CD4-positive, alpha-beta T cell (primary cell): ENCODE measurements at regions of chr9 and their contacts with region 1.

Region 1: DNA sequence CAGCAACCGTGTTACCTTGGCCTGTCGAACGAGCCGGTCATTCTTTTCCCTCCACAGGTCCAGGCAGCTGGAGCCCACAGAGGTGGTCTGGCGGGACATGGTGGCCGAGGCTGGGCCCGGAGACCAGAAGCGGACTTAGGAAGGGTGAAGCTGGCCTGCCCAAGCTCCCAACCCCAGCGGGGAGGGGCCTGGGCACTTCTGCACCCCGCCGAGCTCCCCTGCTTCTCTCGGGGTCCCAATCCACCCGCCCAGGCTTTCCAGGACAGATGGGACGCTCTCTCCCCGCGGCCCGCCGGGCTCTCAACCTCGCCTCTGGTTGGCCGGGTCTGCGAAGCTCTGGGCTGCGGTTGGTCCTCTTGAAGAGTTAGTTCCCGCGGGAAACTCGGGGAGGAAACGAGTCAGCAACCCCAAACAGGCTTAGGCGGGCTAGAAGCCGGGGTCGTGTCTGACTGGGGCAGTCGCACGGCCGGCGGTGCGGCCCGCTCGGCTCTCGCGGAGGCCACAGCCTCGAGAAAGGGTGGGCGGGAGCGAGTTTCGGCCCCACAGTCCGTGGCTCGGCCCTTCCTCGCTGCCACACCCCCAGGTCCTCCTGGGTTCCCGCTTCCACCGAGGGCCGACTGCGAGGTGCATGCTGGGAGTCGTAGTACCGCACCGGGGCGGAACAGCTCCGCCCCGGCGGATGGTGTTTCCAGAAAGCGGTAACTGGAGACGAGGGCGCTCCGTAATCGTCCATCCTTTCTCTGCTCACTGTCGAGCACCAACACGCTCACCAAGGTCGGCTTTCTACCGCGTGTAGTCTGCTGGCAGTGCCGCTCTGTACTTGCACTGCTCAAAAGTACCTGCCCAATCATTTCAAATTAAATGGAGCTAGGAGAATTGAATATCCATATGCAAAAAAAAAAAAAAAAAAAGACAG is at the start of gene FANCG:
- DNase-seq: peak; percentile 60 to 90 (median 74)
- ATAC-seq: peak; percentile 90
- H3K4me3 ChIP-seq: peak within 1 kb of the TSS; percentile 69
- H3K4me3 Mint-ChIP-seq: peak within 1 kb of the TSS; percentile 96
- H3K27ac ChIP-seq: peak within 1 kb of the TSS; percentile 43 to 62
- H3K27ac Mint-ChIP-seq: peak within 1 kb of the TSS; percentile 91
- H3K4me1 ChIP-seq: peaks cover 19% of the 10 kb centered on the region
- H3K4me1 Mint-ChIP-seq: peaks cover 23% of the 10 kb centered on the region
- H3K27me3 ChIP-seq: no peaks in the 10 kb centered on the region
- H3K27me3 Mint-ChIP-seq: no peaks in the 10 kb centered on the region
- CTCF ChIP-seq: no peak
- total RNA-seq, gene FANCG: 21.7 to 24.6 TPM

Region 2: GRCh38 chr9:34825775-34826174 is 253.9 kb before region 1 on chr9:
- CTCF ChIA-PET with region 1: no interaction called
- POLR2A ChIA-PET with region 1: no interaction called
- intact Hi-C with region 1: no loop called
- DNase-seq: no peak
- ATAC-seq: no peak
- H3K4me3 ChIP-seq: no peak overlapping the region
- H3K4me3 Mint-ChIP-seq: no peak overlapping the region
- H3K27ac ChIP-seq: no peak overlapping the region
- H3K27ac Mint-ChIP-seq: no peak overlapping the region
- H3K4me1 ChIP-seq: no peaks in the 10 kb centered on the region
- H3K4me1 Mint-ChIP-seq: no peaks in the 10 kb centered on the region
- H3K27me3 ChIP-seq: peaks cover 8 to 17% of the 10 kb centered on the region in 2 experiments
- H3K27me3 Mint-ChIP-seq: peaks cover 29% of the 10 kb centered on the region
- CTCF ChIP-seq: no peak

Region 3: DNA sequence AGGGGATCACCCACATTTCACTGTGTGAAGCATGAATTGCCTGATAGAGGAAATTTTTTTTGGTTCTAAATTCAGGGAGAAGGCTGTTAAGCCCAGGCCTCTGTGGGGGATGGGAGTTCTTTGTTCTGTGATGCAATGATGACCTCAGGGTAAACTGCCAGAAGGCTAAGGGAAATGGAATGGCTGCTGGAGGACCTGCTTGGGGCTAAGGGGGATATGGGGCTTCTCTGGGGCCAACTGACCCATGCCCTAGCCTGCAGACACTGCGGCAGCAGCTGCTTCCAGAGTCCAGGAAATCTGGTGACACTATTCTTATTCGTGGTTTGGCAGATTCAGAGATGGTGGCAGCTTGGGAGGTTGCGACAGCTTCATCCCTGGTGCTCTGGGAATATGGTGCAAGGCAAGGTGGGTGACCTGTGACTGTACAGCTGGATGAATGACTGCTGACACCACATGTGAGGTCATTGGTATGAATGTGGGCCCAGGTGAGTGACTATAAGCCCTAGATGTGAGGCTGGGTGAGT is 37.5 kb before region 1 on chr9:
- CTCF ChIA-PET with region 1: no interaction called
- POLR2A ChIA-PET with region 1: no interaction called
- intact Hi-C with region 1: no loop called
- DNase-seq: no peak
- ATAC-seq: no peak
- H3K4me3 ChIP-seq: no peak overlapping the region
- H3K4me3 Mint-ChIP-seq: no peak overlapping the region
- H3K27ac ChIP-seq: no peak overlapping the region
- H3K27ac Mint-ChIP-seq: no peak overlapping the region
- H3K4me1 ChIP-seq: no peaks in the 10 kb centered on the region
- H3K4me1 Mint-ChIP-seq: no peaks in the 10 kb centered on the region
- H3K27me3 ChIP-seq: no peaks in the 10 kb centered on the region
- H3K27me3 Mint-ChIP-seq: no peaks in the 10 kb centered on the region
- CTCF ChIP-seq: no peak

Region 4: GRCh38 chr9:35096035-35096849 is 16.6 kb after region 1 on chr9 and contains the start of gene PIGO:
- CTCF ChIA-PET with region 1: interaction called, 26 read pairs
- POLR2A ChIA-PET with region 1: interaction called, 51 read pairs
- intact Hi-C with region 1: loop called in 1 of 2 experiments (anchors 1 kb)
- DNase-seq: peak; percentile 81 to 95 (median 88)
- ATAC-seq: peak; percentile 88
- H3K4me3 ChIP-seq: peak within 1 kb of the TSS; percentile 82
- H3K4me3 Mint-ChIP-seq: peak within 1 kb of the TSS; percentile 92
- H3K27ac ChIP-seq: peak within 1 kb of the TSS; percentile 96 to 99
- H3K27ac Mint-ChIP-seq: peak within 1 kb of the TSS; percentile 93
- H3K4me1 ChIP-seq: peaks cover 26% of the 10 kb centered on the region
- H3K4me1 Mint-ChIP-seq: peaks cover 43% of the 10 kb centered on the region
- H3K27me3 ChIP-seq: no peaks in the 10 kb centered on the region
- H3K27me3 Mint-ChIP-seq: no peaks in the 10 kb centered on the region
- CTCF ChIP-seq: peak; percentile 81
- total RNA-seq, gene PIGO: 17.5 to 18.9 TPM

Region 5: GRCh38 chr9:35102926-35103659 is 23.4 kb after region 1 on chr9 and contains the start of gene STOML2:
- CTCF ChIA-PET with region 1: interaction called, 4 read pairs
- POLR2A ChIA-PET with region 1: interaction called, 24 read pairs
- intact Hi-C with region 1: loop called in 1 of 2 experiments (anchors 1 kb)
- DNase-seq: peak; percentile 84 to 97 (median 90)
- ATAC-seq: peak; percentile 98
- H3K4me3 ChIP-seq: peak within 1 kb of the TSS; percentile 99
- H3K4me3 Mint-ChIP-seq: peak within 1 kb of the TSS; percentile 92
- H3K27ac ChIP-seq: peak within 1 kb of the TSS; percentile 77 to 94
- H3K27ac Mint-ChIP-seq: peak within 1 kb of the TSS; percentile 89
- H3K4me1 ChIP-seq: peaks cover 28% of the 10 kb centered on the region
- H3K4me1 Mint-ChIP-seq: peaks cover 36% of the 10 kb centered on the region
- H3K27me3 ChIP-seq: no peaks in the 10 kb centered on the region
- H3K27me3 Mint-ChIP-seq: no peaks in the 10 kb centered on the region
- CTCF ChIP-seq: no peak
- total RNA-seq, gene STOML2: 29.8 to 30.5 TPM

Region 6: DNA sequence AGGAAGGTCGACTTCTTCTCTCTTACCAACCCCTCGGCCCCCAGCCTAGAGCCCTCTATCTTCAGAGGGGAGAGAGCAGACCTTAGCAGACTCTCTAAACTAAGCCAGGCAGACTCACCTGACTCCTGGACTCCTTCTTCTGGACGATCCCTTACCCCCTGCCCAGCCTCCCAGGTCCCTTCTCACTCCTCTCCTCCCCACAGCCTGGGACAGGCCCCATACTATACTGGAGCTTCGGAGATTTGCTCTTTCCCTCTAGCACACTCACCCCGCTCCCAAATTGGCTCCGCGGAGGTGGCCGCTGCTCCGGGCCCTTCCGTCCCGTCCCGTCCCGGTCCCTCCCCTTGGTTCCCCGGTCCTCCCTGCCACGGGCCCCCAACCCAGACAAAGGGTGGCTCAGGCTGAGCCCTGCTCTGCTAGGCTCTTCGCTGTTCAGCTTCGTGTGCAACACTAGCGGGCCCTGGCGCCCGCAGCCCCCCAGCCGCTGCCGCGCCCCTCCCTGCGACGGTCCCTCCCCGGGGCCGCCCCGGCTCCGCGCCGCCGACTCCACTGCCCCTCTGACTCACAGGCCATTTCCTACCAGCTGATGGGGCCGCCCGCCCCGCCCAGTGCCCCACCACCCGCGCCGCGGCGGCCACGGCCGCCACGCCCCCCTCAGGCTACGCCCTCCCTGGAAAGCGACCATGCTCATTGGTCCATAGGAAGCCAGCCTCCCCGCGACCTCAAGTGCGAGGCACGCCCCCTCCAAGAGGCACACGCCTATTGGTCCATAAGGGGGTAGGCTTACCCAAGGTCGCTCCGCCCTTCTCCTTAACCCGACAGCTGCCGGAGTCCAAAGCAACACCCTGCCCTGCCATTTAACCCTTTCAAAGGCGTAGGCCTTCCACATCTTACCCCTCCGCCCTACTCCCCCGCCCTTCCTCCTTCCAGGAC is 31.6 kb after region 1 on chr9:
- CTCF ChIA-PET with region 1: no interaction called
- POLR2A ChIA-PET with region 1: interaction called, 11 read pairs
- intact Hi-C with region 1: loop called (anchors 2 to 5 kb)
- DNase-seq: peak; percentile 92 to 98 (median 96)
- ATAC-seq: peak; percentile 80
- H3K4me3 ChIP-seq: peak overlapping the region; percentile 73
- H3K4me3 Mint-ChIP-seq: peak overlapping the region; percentile 93
- H3K27ac ChIP-seq: peak overlapping the region; percentile 70 to 74
- H3K27ac Mint-ChIP-seq: peak overlapping the region; percentile 84
- H3K4me1 ChIP-seq: peaks cover 54% of the 10 kb centered on the region
- H3K4me1 Mint-ChIP-seq: peaks cover 61% of the 10 kb centered on the region
- H3K27me3 ChIP-seq: no peaks in the 10 kb centered on the region
- H3K27me3 Mint-ChIP-seq: no peaks in the 10 kb centered on the region
- CTCF ChIP-seq: no peak

Region 7: DNA sequence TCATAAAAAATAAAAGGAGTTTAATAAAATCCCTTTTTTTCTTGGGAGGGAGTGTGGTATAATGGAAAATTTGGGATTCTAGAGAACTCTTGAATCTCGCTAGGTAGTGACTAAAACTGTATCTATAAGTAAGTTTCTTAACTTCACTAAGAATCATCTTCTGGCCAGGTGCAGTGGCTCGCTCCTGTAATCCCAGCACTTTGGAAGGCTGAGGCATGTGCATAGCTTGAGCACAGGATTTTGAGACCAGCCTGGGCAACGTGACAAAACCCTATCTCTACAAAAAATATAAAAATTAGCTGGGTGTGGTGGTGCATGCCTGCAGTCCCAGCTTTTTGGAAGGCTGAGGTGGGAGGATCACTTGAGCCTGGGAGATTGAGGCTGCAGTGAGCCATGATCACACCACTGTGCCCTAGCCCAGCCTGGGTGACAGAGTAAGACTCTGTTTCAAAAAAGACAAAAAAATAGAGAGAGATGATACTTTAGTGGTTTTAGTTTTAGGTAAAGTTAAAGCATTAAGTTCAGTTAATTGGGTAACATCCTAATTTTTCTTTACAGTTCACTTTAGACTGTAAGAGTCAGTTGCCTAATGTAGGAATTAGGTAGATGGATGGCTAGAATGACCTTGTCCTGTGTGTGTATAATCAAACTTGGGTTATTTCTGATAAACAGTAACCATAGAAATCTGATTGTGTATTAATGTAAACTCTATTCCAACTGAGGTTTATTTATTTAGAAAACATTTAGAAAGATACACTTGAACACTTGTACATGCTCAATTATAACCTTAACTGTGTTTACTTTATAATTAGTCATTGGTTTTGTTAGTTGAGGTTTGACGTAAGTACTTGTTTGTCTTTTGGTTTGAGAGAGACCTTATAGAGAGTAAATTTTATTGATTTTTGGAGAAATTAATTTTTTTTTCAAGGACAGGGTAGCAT is 99.9 kb after region 1 on chr9:
- CTCF ChIA-PET with region 1: no interaction called
- POLR2A ChIA-PET with region 1: no interaction called
- intact Hi-C with region 1: no loop called
- DNase-seq: no peak
- ATAC-seq: no peak
- H3K4me3 ChIP-seq: no peak overlapping the region
- H3K4me3 Mint-ChIP-seq: no peak overlapping the region
- H3K27ac ChIP-seq: no peak overlapping the region
- H3K27ac Mint-ChIP-seq: no peak overlapping the region
- H3K4me1 ChIP-seq: no peaks in the 10 kb centered on the region
- H3K4me1 Mint-ChIP-seq: no peaks in the 10 kb centered on the region
- H3K27me3 ChIP-seq: no peaks in the 10 kb centered on the region
- H3K27me3 Mint-ChIP-seq: peaks cover 8% of the 10 kb centered on the region
- CTCF ChIP-seq: no peak